ENCODE measurements at regions of chr1 and their contacts with region 1.

Region 1: DNA sequence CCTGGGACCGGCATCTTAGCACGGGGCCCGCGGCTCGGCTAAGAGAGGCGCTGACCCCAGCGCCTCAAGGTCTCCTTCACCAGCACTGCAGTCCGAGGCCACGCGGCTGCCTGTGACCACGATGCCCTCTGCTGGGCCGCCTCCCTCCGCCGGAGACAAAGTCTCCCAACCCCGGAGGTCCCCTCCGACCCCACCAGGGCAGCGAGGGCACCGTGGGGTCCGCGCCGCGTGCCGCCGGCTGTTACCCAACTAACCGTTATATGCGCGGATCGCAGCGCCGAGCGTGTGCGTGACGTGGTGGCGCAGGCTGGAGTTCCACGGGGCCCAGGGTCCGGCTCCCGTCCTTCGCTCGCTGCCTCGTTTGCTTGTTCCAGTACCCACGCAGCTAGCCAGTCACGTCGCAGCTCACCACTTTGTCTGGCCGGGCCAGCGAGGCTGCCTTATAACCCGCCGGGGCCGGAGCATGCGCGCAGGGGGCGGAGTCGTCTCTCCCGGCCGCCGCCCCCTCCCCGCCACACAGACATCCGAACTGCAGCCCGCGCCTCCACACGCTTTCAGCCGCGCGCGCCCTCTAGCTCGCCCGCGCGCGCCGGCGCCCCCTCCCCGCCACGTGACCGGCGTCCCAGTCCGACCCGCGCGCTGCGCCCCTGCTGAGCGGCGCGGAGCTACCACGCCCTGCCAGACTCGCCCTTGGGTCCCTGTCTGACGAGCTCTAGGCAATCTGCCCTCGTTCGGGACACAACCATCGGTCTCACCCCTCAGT is at the start of gene SLC16A1:
- DNase-seq: peak; percentile 91 to 95 (median 92)
- H3K4me3 ChIP-seq: peak within 1 kb of the TSS; percentile 47 to 75 (median 68)
- H3K27ac ChIP-seq: peak within 1 kb of the TSS; percentile 85 to 96 (median 90)
- H3K4me1 ChIP-seq: peaks cover 6 to 27% of the 10 kb centered on the region in 2 donors
- H3K27me3 ChIP-seq: no peaks in the 10 kb centered on the region
- CTCF ChIP-seq: peak in 5 of 6 experiments; percentile 6 to 37 (median 26)
- POLR2A ChIP-seq: peak; percentile 82 to 96
- total RNA-seq, gene SLC16A1: 20.9 to 67.9 (median 28.9) TPM

Region 2: GRCh38 chr1:112803906-112804762 is 151.8 kb before region 1 on chr1:
- intact Hi-C with region 1: no loop called
- DNase-seq: peak; percentile 72 to 91 (median 84)
- H3K4me3 ChIP-seq: no peak overlapping the region
- H3K27ac ChIP-seq: no peak overlapping the region
- H3K4me1 ChIP-seq: no peaks in the 10 kb centered on the region
- H3K27me3 ChIP-seq: no peaks in the 10 kb centered on the region
- CTCF ChIP-seq: peak; percentile 55 to 92 (median 84)
- POLR2A ChIP-seq: no peak

Region 3: DNA sequence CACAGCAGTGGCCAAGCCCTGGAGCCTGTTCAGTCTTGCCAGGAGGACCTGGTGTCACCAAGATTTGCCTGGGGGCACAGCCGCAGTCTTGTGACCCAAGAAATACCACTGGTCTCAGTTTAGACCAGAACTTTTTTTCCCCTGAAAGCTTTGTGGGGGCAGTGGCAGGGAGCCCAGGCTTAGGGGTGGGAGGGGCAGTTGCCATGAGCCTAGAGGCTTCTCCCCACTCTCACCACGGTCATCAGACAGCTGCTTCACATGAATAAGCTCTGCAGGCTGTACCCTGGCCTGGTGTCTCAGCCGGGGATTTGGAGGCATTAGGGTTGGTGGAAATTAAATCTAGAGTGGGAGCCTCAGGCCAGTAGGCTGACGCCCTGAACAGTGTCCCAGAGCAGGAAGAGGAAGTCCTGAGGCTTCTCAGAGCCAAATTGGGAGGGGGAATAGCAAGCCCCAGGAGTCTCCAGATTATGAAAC is 73.7 kb before region 1 on chr1:
- intact Hi-C with region 1: loop called (anchors 10 kb)
- DNase-seq: no peak
- H3K4me3 ChIP-seq: no peak overlapping the region
- H3K27ac ChIP-seq: peak overlapping the region in 1 of 5 donors; percentile 36
- H3K4me1 ChIP-seq: no peaks in the 10 kb centered on the region
- H3K27me3 ChIP-seq: no peaks in the 10 kb centered on the region
- CTCF ChIP-seq: no peak
- POLR2A ChIP-seq: no peak

Region 4: DNA sequence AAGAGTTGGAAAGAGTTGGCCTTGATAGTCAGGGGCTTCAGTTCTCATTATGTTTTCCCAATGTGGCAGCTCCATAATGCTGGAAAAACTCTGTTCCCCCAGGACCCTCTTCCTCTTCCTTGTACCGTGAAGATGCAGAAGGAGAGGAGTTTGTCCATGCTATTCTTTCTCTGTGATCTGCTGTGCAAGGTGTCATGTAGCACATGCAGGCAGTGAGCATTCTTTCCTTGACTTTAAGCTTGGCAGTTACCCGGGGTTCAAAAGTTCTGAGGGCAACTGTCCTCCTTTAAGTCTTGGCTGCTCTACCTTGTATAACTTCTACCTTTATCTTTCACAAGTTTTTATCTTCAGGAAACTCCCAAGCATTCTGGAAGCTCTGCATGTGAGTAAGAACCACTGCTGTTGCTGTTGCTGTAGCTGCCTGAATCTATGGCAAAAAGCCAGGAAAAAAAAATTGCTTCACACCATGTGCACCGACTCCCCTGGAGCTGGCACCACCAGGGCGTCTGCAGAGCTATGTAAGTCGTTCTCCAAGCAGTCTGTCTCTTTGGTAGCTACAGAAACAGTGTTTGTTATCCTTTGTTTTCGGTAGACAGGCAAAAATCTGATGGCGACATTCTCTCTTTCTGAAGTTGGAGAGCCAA is 42.8 kb after region 1 on chr1:
- intact Hi-C with region 1: no loop called
- DNase-seq: peak in 5 of 7 donors; percentile 28 to 61 (median 50)
- H3K4me3 ChIP-seq: no peak overlapping the region
- H3K27ac ChIP-seq: no peak overlapping the region
- H3K4me1 ChIP-seq: no peaks in the 10 kb centered on the region
- H3K27me3 ChIP-seq: no peaks in the 10 kb centered on the region
- CTCF ChIP-seq: no peak
- POLR2A ChIP-seq: no peak

Region 5: DNA sequence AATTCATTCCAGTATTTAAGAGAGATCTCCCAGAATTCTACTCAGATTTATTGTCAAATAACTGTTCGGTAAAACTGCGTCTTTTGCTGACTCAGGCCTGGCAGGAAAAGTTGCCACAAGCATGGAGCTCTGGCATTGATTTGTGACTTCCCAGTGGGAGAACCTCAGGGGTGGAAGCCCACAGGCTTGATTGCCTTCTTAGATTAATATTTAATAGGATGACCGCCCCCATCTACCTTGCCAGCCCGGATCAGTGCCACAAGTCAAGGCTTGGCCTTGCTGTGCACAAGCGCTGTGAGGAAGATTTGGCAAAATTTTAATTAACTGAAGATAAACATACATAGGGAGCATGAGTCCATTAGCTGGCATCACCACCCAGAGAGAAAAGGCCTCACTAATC is 210.5 kb after region 1 on chr1:
- intact Hi-C with region 1: no loop called
- DNase-seq: no peak
- H3K4me3 ChIP-seq: no peak overlapping the region
- H3K27ac ChIP-seq: no peak overlapping the region
- H3K4me1 ChIP-seq: no peaks in the 10 kb centered on the region
- H3K27me3 ChIP-seq: no peaks in the 10 kb centered on the region
- CTCF ChIP-seq: no peak
- POLR2A ChIP-seq: no peak

Region 6: DNA sequence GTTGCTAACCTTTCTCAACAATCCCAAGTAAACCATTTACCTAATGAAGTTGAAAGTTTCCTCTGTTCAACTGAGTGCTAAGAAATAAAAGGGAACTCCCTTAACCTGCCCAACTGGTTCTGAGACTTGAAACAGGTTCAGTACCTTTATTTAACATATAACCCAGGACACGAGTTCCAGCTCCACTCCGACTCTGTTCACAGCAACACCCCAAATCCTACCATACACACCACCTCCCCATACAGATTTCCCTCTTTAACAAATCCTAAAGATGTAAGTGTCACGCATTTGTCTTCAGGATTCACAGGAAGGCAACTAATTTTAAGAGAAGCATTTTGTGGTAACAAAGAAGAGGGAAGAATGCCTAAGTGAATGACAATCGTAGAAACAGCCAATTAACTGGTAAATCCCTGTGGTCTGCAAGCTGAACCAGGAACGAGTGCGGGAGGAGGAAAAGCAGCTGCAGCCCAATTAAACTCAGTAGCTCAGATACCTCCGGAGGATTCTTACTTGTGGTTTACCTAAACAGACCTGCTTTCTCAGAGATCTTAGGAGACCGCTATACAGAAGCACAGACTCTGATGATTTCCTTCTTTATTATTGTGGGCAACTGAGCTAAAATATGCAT is 299.9 kb after region 1 on chr1:
- intact Hi-C with region 1: no loop called
- DNase-seq: no peak
- H3K4me3 ChIP-seq: no peak overlapping the region
- H3K27ac ChIP-seq: no peak overlapping the region
- H3K4me1 ChIP-seq: no peaks in the 10 kb centered on the region
- H3K27me3 ChIP-seq: no peaks in the 10 kb centered on the region
- CTCF ChIP-seq: no peak
- POLR2A ChIP-seq: no peak

Measured in adrenal gland (tissue), 19 donors.